ENCODE measurements at regions of chr7 and their contacts with region 1.

Region 1: GRCh38 chr7:992709-993607 is 10.0 kb downstream of the CYP2W1 start:
- DNase-seq: peak; percentile 72
- ATAC-seq: peak; percentile 97
- H3K4me3 ChIP-seq: no peak overlapping the region
- H3K27ac ChIP-seq: no peak overlapping the region
- H3K4me1 ChIP-seq: peaks cover 6% of the 10 kb centered on the region
- H3K27me3 ChIP-seq: no peaks in the 10 kb centered on the region
- CTCF ChIP-seq: peak; percentile 99 to 100 (median 100); a peak in 5 of 6 replicates
- EP300 ChIP-seq: no peak
- POLR2A ChIP-seq: peak; percentile 71
- RAD21 ChIP-seq: peak; percentile 98

Region 2: GRCh38 chr7:636396-636795 is 356.6 kb before region 1 on chr7:
- CTCF ChIA-PET with region 1: no interaction called
- POLR2A ChIA-PET with region 1: no interaction called
- RAD21 ChIA-PET with region 1: no interaction called
- SMC1A ChIA-PET with region 1: no interaction called
- in situ Hi-C with region 1: no loop called
- intact Hi-C with region 1: no loop called
- DNase-seq: no peak
- ATAC-seq: no peak
- H3K4me3 ChIP-seq: no peak overlapping the region
- H3K27ac ChIP-seq: no peak overlapping the region
- H3K4me1 ChIP-seq: no peaks in the 10 kb centered on the region
- H3K27me3 ChIP-seq: no peaks in the 10 kb centered on the region
- CTCF ChIP-seq: peak in 2 of 3 experiments; percentile 10 to 42; a peak in 2 of 6 replicates
- EP300 ChIP-seq: no peak
- POLR2A ChIP-seq: no peak
- RAD21 ChIP-seq: peak; percentile 47

Region 3: GRCh38 chr7:897771-898376 is 95.1 kb before region 1 on chr7:
- CTCF ChIA-PET with region 1: no interaction called
- POLR2A ChIA-PET with region 1: no interaction called
- RAD21 ChIA-PET with region 1: no interaction called
- SMC1A ChIA-PET with region 1: no interaction called
- in situ Hi-C with region 1: no loop called
- intact Hi-C with region 1: no loop called
- DNase-seq: no peak
- ATAC-seq: no peak
- H3K4me3 ChIP-seq: no peak overlapping the region
- H3K27ac ChIP-seq: no peak overlapping the region
- H3K4me1 ChIP-seq: no peaks in the 10 kb centered on the region; the same call in 1 of the 2 replicates
- H3K27me3 ChIP-seq: no peaks in the 10 kb centered on the region
- CTCF ChIP-seq: no peak
- EP300 ChIP-seq: no peak
- POLR2A ChIP-seq: peak; percentile 50; the same call in 1 of the 2 replicates
- RAD21 ChIP-seq: no peak

Region 4: GRCh38 chr7:974820-975681 is 17.9 kb before region 1 on chr7 and contains the start of gene COX19:
- CTCF ChIA-PET with region 1: interaction called, 78 read pairs
- POLR2A ChIA-PET with region 1: interaction called, 14 read pairs
- RAD21 ChIA-PET with region 1: interaction called, 35 read pairs
- SMC1A ChIA-PET with region 1: interaction called, 22 read pairs
- in situ Hi-C with region 1: no loop called
- intact Hi-C with region 1: no loop called
- DNase-seq: peak; percentile 42
- ATAC-seq: peak; percentile 87
- H3K4me3 ChIP-seq: peak within 1 kb of the TSS; percentile 78
- H3K27ac ChIP-seq: peak within 1 kb of the TSS; percentile 86
- H3K4me1 ChIP-seq: no peaks in the 10 kb centered on the region
- H3K27me3 ChIP-seq: no peaks in the 10 kb centered on the region
- CTCF ChIP-seq: no peak
- EP300 ChIP-seq: no peak
- POLR2A ChIP-seq: peak; percentile 94
- RAD21 ChIP-seq: no peak
- polyA plus RNA-seq, gene COX19: 3.7 to 6.6 TPM

Region 5: DNA sequence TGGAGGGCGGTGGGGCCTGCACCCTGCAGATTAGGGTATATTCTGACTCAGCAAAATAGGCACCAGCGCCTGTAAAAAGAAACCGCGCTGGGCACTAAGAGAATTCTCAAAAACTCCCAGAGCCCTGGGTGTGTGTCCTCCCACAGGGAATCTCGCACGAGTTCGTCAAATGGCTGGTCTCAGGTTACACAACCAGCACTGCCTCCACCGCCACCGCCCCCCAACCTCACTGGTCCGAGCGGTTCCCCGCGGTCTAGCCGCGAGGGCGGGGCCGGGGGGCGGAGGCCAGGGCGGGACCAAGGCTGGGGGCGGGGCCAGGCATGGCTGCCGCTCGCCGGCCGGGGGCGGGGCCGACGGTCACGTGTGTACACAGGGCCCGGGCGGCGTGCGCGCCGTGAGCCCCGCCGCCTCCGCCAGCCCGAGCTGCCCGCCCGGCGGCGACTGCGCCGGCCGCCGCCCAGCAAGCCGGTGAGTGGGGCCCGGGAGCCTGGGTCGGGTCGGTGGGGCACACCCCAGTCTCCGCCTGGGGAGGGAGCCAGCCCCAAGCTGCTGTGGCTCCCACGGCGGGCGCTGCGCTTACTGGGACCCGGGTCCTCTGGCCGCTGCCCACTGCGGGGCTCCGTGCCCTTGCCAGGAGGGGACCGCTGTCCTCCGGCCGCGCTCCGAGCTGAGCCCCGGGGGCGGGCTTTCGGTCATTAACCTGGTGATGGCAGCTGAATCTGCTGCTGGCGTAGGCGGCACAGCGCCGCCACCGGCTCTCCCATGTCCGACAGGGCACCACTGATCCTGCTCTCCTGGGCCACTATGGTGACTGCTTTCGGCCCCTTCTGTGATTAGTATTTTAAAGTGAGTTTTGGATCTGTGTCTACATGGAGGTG is 51.5 kb after region 1 on chr7 and contains the start of gene GPR146:
- CTCF ChIA-PET with region 1: interaction called, 36 read pairs
- POLR2A ChIA-PET with region 1: interaction called, 3 read pairs
- RAD21 ChIA-PET with region 1: interaction called, 13 read pairs
- SMC1A ChIA-PET with region 1: interaction called, 18 read pairs
- in situ Hi-C with region 1: no loop called
- intact Hi-C with region 1: no loop called
- DNase-seq: no peak
- ATAC-seq: peak; percentile 98
- H3K4me3 ChIP-seq: peak within 1 kb of the TSS; percentile 60; the same call in 1 of the 2 replicates
- H3K27ac ChIP-seq: peak within 1 kb of the TSS; percentile 68
- H3K4me1 ChIP-seq: peaks cover 14% of the 10 kb centered on the region
- H3K27me3 ChIP-seq: no peaks in the 10 kb centered on the region
- CTCF ChIP-seq: peak; percentile 53 to 66 (median 63)
- EP300 ChIP-seq: no peak
- POLR2A ChIP-seq: peak; percentile 71
- RAD21 ChIP-seq: no peak; the same call in 1 of the 2 replicates
- polyA plus RNA-seq, gene GPR146: not detected

Region 6: DNA sequence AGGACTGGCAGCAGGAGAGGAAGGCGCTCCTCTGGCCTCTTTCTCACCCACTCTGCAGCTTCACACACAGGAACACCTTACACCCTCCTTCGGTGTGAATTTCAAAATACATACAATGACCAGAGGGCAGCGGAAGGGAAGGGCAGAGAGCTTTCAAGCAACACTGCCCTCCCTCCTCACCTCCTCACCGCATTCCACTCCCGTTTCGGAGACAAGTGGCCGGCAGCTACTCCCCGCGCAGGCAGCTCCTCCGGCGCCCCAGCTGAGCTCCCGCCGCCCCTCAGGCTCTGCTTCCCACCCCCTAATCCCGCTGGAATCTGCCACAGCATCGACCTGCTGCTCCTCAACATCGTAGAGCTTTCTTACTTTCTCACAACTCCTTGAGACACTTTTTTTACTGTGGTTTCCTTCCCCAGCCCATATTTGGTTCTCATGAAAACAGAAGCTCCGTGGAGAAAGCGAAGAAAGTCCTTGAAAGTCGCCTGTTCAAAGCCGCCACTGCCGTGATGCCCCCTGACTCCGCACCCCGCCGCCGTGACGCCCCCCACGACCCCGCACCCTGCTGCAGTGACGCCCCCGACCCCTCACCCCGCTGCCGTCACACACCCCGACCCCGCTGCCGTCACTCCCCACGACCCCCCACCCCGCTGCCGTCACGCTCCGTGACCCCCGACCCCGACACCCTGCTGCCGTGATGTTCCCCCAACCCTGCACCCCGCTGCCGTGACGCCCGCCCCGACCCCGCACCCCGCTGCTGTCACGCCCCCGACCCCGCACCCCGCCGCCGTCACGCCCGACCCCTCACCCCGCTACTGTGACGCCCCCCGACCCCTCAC is 80.4 kb after region 1 on chr7:
- CTCF ChIA-PET with region 1: interaction called, 19 read pairs
- POLR2A ChIA-PET with region 1: no interaction called
- RAD21 ChIA-PET with region 1: interaction called, 10 read pairs
- SMC1A ChIA-PET with region 1: interaction called, 3 read pairs
- in situ Hi-C with region 1: no loop called
- intact Hi-C with region 1: no loop called
- DNase-seq: no peak
- ATAC-seq: no peak
- H3K4me3 ChIP-seq: no peak overlapping the region
- H3K27ac ChIP-seq: no peak overlapping the region
- H3K4me1 ChIP-seq: no peaks in the 10 kb centered on the region
- H3K27me3 ChIP-seq: no peaks in the 10 kb centered on the region
- CTCF ChIP-seq: no peak
- EP300 ChIP-seq: no peak
- POLR2A ChIP-seq: no peak
- RAD21 ChIP-seq: no peak

Region 7: GRCh38 chr7:1137510-1138167 is 144.7 kb after region 1 on chr7:
- CTCF ChIA-PET with region 1: interaction called, 39 read pairs
- POLR2A ChIA-PET with region 1: no interaction called
- RAD21 ChIA-PET with region 1: interaction called, 21 read pairs
- SMC1A ChIA-PET with region 1: interaction called, 5 read pairs
- in situ Hi-C with region 1: no loop called
- intact Hi-C with region 1: no loop called
- DNase-seq: no peak
- ATAC-seq: peak; percentile 85
- H3K4me3 ChIP-seq: peak overlapping the region; percentile 83
- H3K27ac ChIP-seq: peak overlapping the region; percentile 46
- H3K4me1 ChIP-seq: no peaks in the 10 kb centered on the region; the same call in 1 of the 2 replicates
- H3K27me3 ChIP-seq: no peaks in the 10 kb centered on the region
- CTCF ChIP-seq: no peak
- EP300 ChIP-seq: no peak; a peak in 1 of 4 replicates
- POLR2A ChIP-seq: no peak
- RAD21 ChIP-seq: no peak

Region 8: DNA sequence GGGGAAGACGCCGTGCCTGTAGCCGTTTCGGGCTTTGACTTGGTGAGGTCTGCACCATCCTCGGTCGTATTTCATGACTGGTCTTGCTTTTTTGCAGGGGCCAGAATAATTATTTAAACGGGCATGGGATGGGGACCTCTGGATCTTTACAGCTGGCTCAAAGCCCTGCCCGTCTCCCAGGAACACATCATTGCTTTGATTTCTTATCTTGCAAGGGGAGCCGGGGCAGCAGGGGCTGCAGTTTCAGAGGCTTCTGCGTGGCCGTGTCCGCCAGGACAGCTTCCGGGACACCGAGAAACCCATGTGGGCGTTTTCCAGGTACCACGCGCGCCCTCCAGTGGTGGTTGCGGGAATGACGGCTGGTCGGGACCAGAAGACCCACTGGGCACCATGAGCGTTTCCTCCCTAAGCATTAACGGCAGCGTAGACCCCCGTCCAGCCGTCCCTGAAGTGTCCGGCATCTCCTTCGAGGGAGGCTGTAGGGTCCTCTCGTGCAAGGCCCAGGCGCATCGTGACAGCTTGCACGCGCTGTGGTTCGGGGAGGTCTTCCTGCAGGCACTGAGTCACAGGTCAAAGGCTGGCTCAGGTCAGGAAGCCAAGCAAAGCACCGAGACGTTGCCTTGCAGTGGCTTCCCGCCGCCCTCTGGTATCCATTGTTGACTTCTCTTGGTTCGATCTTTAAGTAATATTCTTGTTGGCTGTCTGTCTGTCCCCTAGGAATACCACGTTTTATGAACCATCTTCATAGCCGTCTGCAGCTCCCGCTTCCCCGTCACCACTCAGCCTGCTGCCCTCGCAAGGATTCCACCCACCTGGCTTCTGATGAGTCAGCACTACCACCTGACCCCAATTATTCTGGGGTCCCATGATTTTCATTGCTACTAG is 183.3 kb after region 1 on chr7:
- CTCF ChIA-PET with region 1: interaction called, 115 read pairs
- POLR2A ChIA-PET with region 1: interaction called, 9 read pairs
- RAD21 ChIA-PET with region 1: interaction called, 42 read pairs
- SMC1A ChIA-PET with region 1: interaction called, 35 read pairs
- in situ Hi-C with region 1: loop called (anchors 5 kb)
- intact Hi-C with region 1: loop called (anchors 1 kb)
- DNase-seq: peak; percentile 26
- ATAC-seq: peak; percentile 95
- H3K4me3 ChIP-seq: peak overlapping the region; percentile 19; the same call in 1 of the 2 replicates
- H3K27ac ChIP-seq: no peak overlapping the region
- H3K4me1 ChIP-seq: no peaks in the 10 kb centered on the region
- H3K27me3 ChIP-seq: no peaks in the 10 kb centered on the region
- CTCF ChIP-seq: peak; percentile 85 to 96 (median 95)
- EP300 ChIP-seq: no peak
- POLR2A ChIP-seq: 0 out of 2 replicates have a peak, but pooled peaks have one; percentile 37
- RAD21 ChIP-seq: peak; percentile 64

Measured in GM12878 (cell line).